ENCODE measurements at regions of chr10 and their contacts with region 1.

Region 1: GRCh38 chr10:101161494-101162299 is 30.6 kb downstream of the TLX1 start:
- DNase-seq: peak; percentile 33 to 84 (median 70)
- ATAC-seq: peak; percentile 97
- H3K4me3 ChIP-seq: no peak overlapping the region
- H3K4me3 Mint-ChIP-seq: no peak overlapping the region
- H3K27ac ChIP-seq: no peak overlapping the region
- H3K27ac Mint-ChIP-seq: no peak overlapping the region
- H3K4me1 ChIP-seq: peaks cover 3% of the 10 kb centered on the region
- H3K4me1 Mint-ChIP-seq: peaks cover 5% of the 10 kb centered on the region
- H3K27me3 ChIP-seq: peaks cover 3 to 6% of the 10 kb centered on the region in 2 experiments
- H3K27me3 Mint-ChIP-seq: peaks cover 51% of the 10 kb centered on the region
- CTCF ChIP-seq: peak; percentile 90

Region 2: GRCh38 chr10:100986952-100987750 is 174.5 kb before region 1 on chr10 and contains the starts of genes MRPL43 and TWNK:
- CTCF ChIA-PET with region 1: no interaction called
- POLR2A ChIA-PET with region 1: no interaction called
- intact Hi-C with region 1: no loop called
- DNase-seq: peak; percentile 68 to 90 (median 87)
- ATAC-seq: peak; percentile 95
- H3K4me3 ChIP-seq: peak within 1 kb of the TSS; percentile 79 to 93
- H3K4me3 Mint-ChIP-seq: peak within 1 kb of the TSS; percentile 99
- H3K27ac ChIP-seq: peak within 1 kb of the TSS; percentile 51 to 64
- H3K27ac Mint-ChIP-seq: peak within 1 kb of the TSS; percentile 95
- H3K4me1 ChIP-seq: peaks cover 35% of the 10 kb centered on the region
- H3K4me1 Mint-ChIP-seq: peaks cover 46% of the 10 kb centered on the region
- H3K27me3 ChIP-seq: no peaks in the 10 kb centered on the region
- H3K27me3 Mint-ChIP-seq: no peaks in the 10 kb centered on the region
- CTCF ChIP-seq: no peak
- total RNA-seq, gene MRPL43: 28.3 to 28.4 TPM
- total RNA-seq, gene TWNK: 4.6 to 4.7 TPM

Region 3: GRCh38 chr10:101172741-101173140 is 11.0 kb after region 1 on chr10:
- CTCF ChIA-PET with region 1: interaction called, 16 read pairs
- POLR2A ChIA-PET with region 1: interaction called, 3 read pairs
- intact Hi-C with region 1: no loop called
- DNase-seq: no peak
- ATAC-seq: no peak
- H3K4me3 ChIP-seq: no peak overlapping the region
- H3K4me3 Mint-ChIP-seq: no peak overlapping the region
- H3K27ac ChIP-seq: no peak overlapping the region
- H3K27ac Mint-ChIP-seq: no peak overlapping the region
- H3K4me1 ChIP-seq: no peaks in the 10 kb centered on the region
- H3K4me1 Mint-ChIP-seq: no peaks in the 10 kb centered on the region
- H3K27me3 ChIP-seq: peaks cover 0 to 3% of the 10 kb centered on the region in 2 experiments
- H3K27me3 Mint-ChIP-seq: peaks cover 47% of the 10 kb centered on the region
- CTCF ChIP-seq: no peak

Region 4: GRCh38 chr10:101291331-101292193 is 129.9 kb after region 1 on chr10:
- CTCF ChIA-PET with region 1: no interaction called
- POLR2A ChIA-PET with region 1: no interaction called
- intact Hi-C with region 1: loop called (anchors 1 kb)
- DNase-seq: peak; percentile 31 to 76 (median 53)
- ATAC-seq: peak; percentile 74
- H3K4me3 ChIP-seq: peak overlapping the region; percentile 16 to 54
- H3K4me3 Mint-ChIP-seq: peak overlapping the region; percentile 79
- H3K27ac ChIP-seq: no peak overlapping the region
- H3K27ac Mint-ChIP-seq: no peak overlapping the region
- H3K4me1 ChIP-seq: peaks cover 22% of the 10 kb centered on the region
- H3K4me1 Mint-ChIP-seq: peaks cover 12% of the 10 kb centered on the region
- H3K27me3 ChIP-seq: peaks cover 32 to 36% of the 10 kb centered on the region in 2 experiments
- H3K27me3 Mint-ChIP-seq: peaks cover 71% of the 10 kb centered on the region
- CTCF ChIP-seq: peak; percentile 77